Transverse colon (tissue), 4 donors: ENCODE measurements at regions of chr14 and their contacts with region 1.

Region 1: GRCh38 chr14:49767562-49768300 is at the start of gene KLHDC2:
- DNase-seq: peak; percentile 92
- H3K4me3 ChIP-seq: peak within 1 kb of the TSS; percentile 79 to 99 (median 90)
- H3K27ac ChIP-seq: peak within 1 kb of the TSS; percentile 98 to 100 (median 99)
- H3K4me1 ChIP-seq: peaks cover 22 to 39% (median 38%) of the 10 kb centered on the region in 4 donors
- H3K27me3 ChIP-seq: no peaks in the 10 kb centered on the region
- CTCF ChIP-seq: peak in 2 of 5 experiments; percentile 8
- EP300 ChIP-seq: no peak
- POLR2A ChIP-seq: peak; percentile 77
- total RNA-seq, gene KLHDC2: 88.6 to 113 (median 109) TPM

Region 2: GRCh38 chr14:48008646-48009045 is 1759.1 kb before region 1 on chr14:
- in situ Hi-C with region 1: no loop called
- intact Hi-C with region 1: no loop called
- DNase-seq: no peak
- H3K4me3 ChIP-seq: no peak overlapping the region
- H3K27ac ChIP-seq: no peak overlapping the region
- H3K4me1 ChIP-seq: no peaks in the 10 kb centered on the region
- H3K27me3 ChIP-seq: no peaks in the 10 kb centered on the region
- CTCF ChIP-seq: no peak
- EP300 ChIP-seq: no peak
- POLR2A ChIP-seq: no peak

Region 3: DNA sequence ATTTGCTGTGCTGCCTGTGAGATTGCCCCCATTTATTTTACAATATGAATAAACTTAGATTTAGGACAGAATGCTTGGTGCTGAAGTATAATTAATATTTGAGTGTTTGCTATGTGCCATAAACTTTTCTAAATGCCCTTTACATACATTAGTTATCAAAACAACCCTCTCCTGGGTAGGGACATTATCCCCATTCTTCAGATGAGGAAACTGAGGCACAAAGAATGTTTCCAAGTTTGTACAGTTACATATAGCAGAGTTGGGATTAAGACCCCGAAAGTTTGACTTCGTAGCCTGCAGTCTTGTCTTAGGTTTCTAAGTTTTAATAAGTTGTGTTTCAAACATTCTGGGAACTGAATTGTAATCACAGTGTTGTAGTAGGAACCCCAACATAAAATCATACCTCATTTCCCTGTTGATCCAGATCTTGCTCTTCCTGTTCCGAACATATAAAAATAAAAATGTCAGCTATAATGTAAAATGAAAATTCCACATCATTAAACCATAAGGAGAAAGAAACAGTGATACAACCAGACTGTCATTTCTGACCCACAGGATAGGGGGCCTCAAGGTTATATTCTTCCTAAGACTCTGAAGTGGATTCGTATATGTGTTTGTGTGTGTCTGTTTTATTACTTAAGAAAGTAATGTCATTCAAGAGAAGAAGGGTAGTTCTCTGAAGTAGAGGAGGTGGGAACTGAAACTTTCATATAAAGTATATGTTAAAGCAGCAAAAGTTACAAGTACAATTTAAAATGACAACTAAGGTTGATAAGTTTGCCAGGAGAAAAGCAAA is 18.8 kb after region 1 on chr14:
- in situ Hi-C with region 1: no loop called
- intact Hi-C with region 1: loop called (anchors 1 kb)
- DNase-seq: no peak
- H3K4me3 ChIP-seq: no peak overlapping the region
- H3K27ac ChIP-seq: no peak overlapping the region
- H3K4me1 ChIP-seq: peaks cover 0 to 5% (median 0%) of the 10 kb centered on the region in 4 donors
- H3K27me3 ChIP-seq: no peaks in the 10 kb centered on the region
- CTCF ChIP-seq: no peak
- EP300 ChIP-seq: no peak
- POLR2A ChIP-seq: no peak